PC-3 (cell line): ENCODE measurements at regions of chr12 and their contacts with region 1.

Region 1: DNA sequence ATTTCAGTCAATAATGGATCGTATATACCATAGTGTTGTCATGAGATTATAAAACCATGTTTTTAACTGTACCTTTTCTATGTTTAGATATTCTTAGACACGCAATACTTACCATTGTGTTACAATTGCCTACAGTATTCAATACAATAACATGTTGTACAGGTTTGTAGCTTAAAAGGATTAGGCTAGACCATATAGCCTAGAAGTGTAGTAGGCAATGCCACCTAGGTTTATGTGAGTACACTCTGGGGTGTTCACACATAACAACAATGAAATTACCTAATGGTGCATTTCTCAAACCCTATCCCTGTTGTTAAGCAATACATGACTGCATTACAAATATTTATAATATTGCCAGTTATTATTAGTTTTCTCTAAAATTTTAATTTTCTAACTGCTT is 144.2 kb downstream of the KCNC2 start:
- DNase-seq: no peak
- ATAC-seq: no peak
- H3K4me3 ChIP-seq: no peak overlapping the region
- H3K27ac ChIP-seq: no peak overlapping the region
- H3K4me1 ChIP-seq: no peaks in the 10 kb centered on the region
- H3K27me3 ChIP-seq: no peaks in the 10 kb centered on the region; the same call in 1 of the 2 replicates
- CTCF ChIP-seq: no peak

Region 2: GRCh38 chr12:75275702-75276101 is 210.2 kb after region 1 on chr12:
- CTCF ChIA-PET with region 1: no interaction called
- POLR2A ChIA-PET with region 1: no interaction called
- intact Hi-C with region 1: loop called (anchors 5 kb)
- DNase-seq: peak; percentile 34
- ATAC-seq: peak; percentile 91
- H3K4me3 ChIP-seq: no peak overlapping the region
- H3K27ac ChIP-seq: no peak overlapping the region
- H3K4me1 ChIP-seq: peaks cover 10% of the 10 kb centered on the region
- H3K27me3 ChIP-seq: no peaks in the 10 kb centered on the region
- CTCF ChIP-seq: no peak